ENCODE measurements at regions of chr17 and their contacts with region 1.

Region 1: GRCh38 chr17:75632863-75633485 is at the start of gene SMIM5:
- DNase-seq: peak; percentile 83
- ATAC-seq: peak; percentile 89
- H3K4me3 Mint-ChIP-seq: peak within 1 kb of the TSS; percentile 11
- H3K27ac Mint-ChIP-seq: no peak within 1 kb of the TSS
- H3K4me1 Mint-ChIP-seq: peaks cover 13% of the 10 kb centered on the region
- H3K27me3 Mint-ChIP-seq: no peaks in the 10 kb centered on the region
- CTCF ChIP-seq: no peak
- total RNA-seq, gene SMIM5: 1.1 and 1.7 TPM in 2 replicates

Region 2: DNA sequence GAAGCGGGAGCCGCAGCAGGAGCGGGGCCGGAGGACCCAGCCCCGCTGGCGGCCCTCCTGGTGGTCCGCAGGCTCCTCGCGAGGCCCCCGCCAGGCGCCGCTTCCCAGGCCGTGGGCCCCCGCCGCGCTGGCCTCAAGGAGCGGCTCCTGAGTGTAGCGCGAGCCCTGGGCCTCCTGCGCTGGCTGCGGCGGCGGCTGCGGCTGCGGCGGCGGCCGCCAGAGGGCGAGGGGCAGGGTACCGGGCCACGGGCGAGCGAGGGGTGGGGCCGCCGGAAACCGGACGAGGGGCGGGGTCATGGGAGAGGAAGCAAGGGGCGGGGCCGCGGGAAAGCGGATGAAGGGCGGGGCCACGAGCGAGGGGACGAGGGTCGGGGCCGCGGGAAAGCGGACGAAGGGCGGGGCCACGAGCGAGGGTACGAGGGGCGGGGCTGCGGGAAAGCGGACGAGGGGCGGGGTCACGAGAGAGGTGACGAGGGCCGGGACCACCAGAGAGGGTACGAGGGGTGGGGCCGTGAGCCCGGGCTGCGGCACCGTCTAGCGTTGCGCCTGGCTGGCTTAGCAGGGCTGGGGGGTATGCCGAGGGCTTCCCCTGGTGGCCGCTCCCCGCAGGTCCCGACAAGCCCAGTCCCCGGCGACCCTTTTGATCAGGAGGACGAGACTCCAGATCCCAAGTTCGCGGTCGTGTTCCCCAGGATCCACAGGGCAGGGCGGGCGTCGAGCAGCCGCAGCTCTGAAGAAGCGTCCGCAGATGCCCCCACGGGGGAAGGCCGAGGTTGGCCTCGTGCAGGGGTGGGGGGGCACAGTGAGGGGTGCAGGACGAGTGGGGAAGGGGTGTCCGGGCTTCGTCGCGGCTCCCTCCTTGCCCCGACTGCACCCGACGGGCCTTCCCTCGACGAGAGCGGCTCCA is 43.7 kb before region 1 on chr17:
- CTCF ChIA-PET with region 1: interaction called, 10 read pairs
- POLR2A ChIA-PET with region 1: no interaction called
- intact Hi-C with region 1: no loop called
- DNase-seq: peak; percentile 97
- ATAC-seq: peak; percentile 84
- H3K4me3 Mint-ChIP-seq: peak overlapping the region; percentile 84
- H3K27ac Mint-ChIP-seq: peak overlapping the region; percentile 73
- H3K4me1 Mint-ChIP-seq: peaks cover 16% of the 10 kb centered on the region
- H3K27me3 Mint-ChIP-seq: no peaks in the 10 kb centered on the region
- CTCF ChIP-seq: no peak

Region 3: DNA sequence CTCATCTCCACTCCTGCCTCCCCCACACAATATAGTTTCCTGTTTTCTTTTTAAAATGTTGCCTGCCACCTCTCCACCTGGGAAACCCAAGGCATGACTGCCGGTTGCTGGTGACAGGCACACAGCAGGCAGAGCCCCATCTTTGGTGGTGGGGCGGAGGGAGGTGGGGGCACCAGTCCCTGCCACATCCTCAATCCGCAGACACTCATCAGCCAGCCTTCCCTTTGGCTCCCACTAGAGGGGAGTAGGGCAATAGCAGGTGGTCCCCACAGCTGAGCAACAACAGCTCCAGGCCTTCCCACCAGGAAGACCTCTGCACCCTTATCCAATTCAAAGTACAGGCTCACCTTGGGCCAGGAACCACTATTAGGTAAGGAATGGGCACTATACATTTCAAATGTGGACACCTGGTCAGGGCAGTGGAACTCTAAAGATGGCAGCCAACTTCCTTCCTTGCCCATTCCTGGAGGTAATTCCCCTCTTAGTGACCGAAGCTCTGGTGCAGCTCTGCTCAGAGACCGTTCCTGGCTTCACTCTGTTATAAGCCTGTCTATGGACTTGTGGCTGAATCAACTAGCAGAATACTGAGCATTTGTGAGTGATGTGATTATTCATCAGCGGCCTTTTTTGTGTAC is 20.1 kb after region 1 on chr17:
- CTCF ChIA-PET with region 1: interaction called, 72 read pairs
- POLR2A ChIA-PET with region 1: interaction called, 3 read pairs
- intact Hi-C with region 1: loop called (anchors 1 kb)
- DNase-seq: no peak
- ATAC-seq: peak; percentile 99
- H3K4me3 Mint-ChIP-seq: no peak overlapping the region
- H3K27ac Mint-ChIP-seq: peak overlapping the region; percentile 72
- H3K4me1 Mint-ChIP-seq: peaks cover 7% of the 10 kb centered on the region
- H3K27me3 Mint-ChIP-seq: no peaks in the 10 kb centered on the region
- CTCF ChIP-seq: no peak

Region 4: GRCh38 chr17:75673487-75673886 is 40.5 kb after region 1 on chr17:
- CTCF ChIA-PET with region 1: interaction called, 10 read pairs
- POLR2A ChIA-PET with region 1: interaction called, 7 read pairs
- intact Hi-C with region 1: loop called (anchors 2 kb)
- DNase-seq: no peak
- ATAC-seq: no peak
- H3K4me3 Mint-ChIP-seq: no peak overlapping the region
- H3K27ac Mint-ChIP-seq: no peak overlapping the region
- H3K4me1 Mint-ChIP-seq: peaks cover 28% of the 10 kb centered on the region
- H3K27me3 Mint-ChIP-seq: no peaks in the 10 kb centered on the region
- CTCF ChIP-seq: no peak

Region 5: DNA sequence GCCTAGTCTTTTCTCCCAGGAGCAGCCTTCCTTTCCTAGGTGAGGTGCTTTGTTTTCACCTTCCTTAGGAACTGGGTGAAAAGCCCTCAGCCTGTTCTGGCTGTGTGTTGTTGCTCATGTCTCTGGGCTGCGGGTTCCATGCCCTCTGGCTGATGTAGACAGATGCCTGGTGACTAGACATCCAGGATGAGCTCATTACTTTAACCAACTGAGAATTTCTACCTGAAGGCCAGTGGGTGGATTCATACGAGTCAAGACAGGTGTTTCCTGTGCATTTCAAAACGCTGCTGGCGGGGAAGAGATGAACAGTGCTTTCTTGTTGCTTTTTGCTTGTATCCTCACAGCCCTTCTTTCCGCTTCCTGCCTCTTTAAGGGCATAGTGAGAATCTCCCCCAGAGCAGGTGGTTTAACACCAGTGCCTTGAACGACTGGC is 56.5 kb after region 1 on chr17:
- CTCF ChIA-PET with region 1: interaction called, 5 read pairs
- POLR2A ChIA-PET with region 1: no interaction called
- intact Hi-C with region 1: loop called (anchors 5 kb)
- DNase-seq: peak; percentile 24
- ATAC-seq: peak; percentile 69
- H3K4me3 Mint-ChIP-seq: peak overlapping the region; percentile 70
- H3K27ac Mint-ChIP-seq: peak overlapping the region; percentile 92
- H3K4me1 Mint-ChIP-seq: peaks cover 66% of the 10 kb centered on the region
- H3K27me3 Mint-ChIP-seq: no peaks in the 10 kb centered on the region
- CTCF ChIP-seq: no peak